HepG2 (cell line): ENCODE measurements at regions of chr22 and their contacts with region 1.

Region 1: DNA sequence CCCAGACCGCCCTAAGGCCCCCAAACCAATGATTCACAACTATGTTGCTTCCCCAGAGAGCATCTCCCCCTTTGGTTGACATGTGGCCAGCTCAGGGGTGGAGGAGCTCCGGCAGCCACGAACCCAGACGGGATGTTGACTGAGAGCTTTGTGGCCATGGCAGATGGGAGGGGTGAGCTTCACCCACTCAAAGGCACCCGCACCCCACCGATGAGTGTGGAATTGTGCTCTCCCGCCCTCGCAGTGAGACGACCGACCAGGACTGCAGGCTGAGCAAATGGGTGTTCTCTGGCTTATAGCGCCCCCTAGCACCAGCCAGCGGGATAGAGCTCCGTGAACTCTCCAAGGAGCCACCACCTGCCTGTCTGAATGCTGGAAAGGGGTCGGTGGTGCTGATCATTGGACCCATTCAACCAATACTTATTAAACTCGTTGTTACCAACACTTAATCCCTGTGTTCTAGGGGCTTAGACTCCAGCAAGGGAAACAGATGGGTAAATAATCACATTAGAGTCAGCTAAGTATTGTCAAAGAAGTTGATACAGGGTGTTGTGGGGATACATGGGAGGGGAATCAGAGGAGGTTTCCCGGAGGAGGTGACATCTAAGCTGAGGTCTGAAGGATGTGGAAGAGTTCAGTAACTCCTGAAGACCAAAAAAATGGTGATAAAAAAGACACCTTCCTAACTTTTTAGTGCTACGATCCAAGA is 4.5 kb upstream of the TIMP3 start:
- DNase-seq: peak; percentile 44
- ATAC-seq: peak; percentile 76
- H3K4me3 ChIP-seq: no peak overlapping the region
- H3K27ac ChIP-seq: no peak overlapping the region
- H3K4me1 ChIP-seq: peaks cover 62% of the 10 kb centered on the region
- H3K27me3 ChIP-seq: no peaks in the 10 kb centered on the region
- CTCF ChIP-seq: peak; percentile 98
- EP300 ChIP-seq: no peak
- POLR2A ChIP-seq: no peak
- RAD21 ChIP-seq: peak; percentile 97

Region 2: GRCh38 chr22:32579509-32580234 is 217.3 kb before region 1 on chr22:
- CTCF ChIA-PET with region 1: no interaction called
- POLR2A ChIA-PET with region 1: interaction called, 10 read pairs
- in situ Hi-C with region 1: no loop called
- intact Hi-C with region 1: no loop called
- DNase-seq: peak; percentile 50
- ATAC-seq: peak; percentile 85
- H3K4me3 ChIP-seq: no peak overlapping the region
- H3K27ac ChIP-seq: peak overlapping the region; percentile 43
- H3K4me1 ChIP-seq: peaks cover 62% of the 10 kb centered on the region
- H3K27me3 ChIP-seq: no peaks in the 10 kb centered on the region
- CTCF ChIP-seq: no peak
- EP300 ChIP-seq: 0 out of 4 replicates have a peak, but pooled peaks of 1 of the 2 experiments have one; percentile 20
- POLR2A ChIP-seq: no peak
- RAD21 ChIP-seq: no peak

Region 3: GRCh38 chr22:32660292-32660691 is 136.7 kb before region 1 on chr22:
- CTCF ChIA-PET with region 1: interaction called, 51 read pairs
- POLR2A ChIA-PET with region 1: interaction called, 20 read pairs
- in situ Hi-C with region 1: loop called (anchors 5 kb)
- intact Hi-C with region 1: loop called (anchors 1 kb)
- DNase-seq: peak; percentile 78
- ATAC-seq: peak; percentile 92
- H3K4me3 ChIP-seq: no peak overlapping the region
- H3K27ac ChIP-seq: no peak overlapping the region
- H3K4me1 ChIP-seq: peaks cover 18% of the 10 kb centered on the region
- H3K27me3 ChIP-seq: no peaks in the 10 kb centered on the region
- CTCF ChIP-seq: peak; percentile 97
- EP300 ChIP-seq: peak; percentile 25 to 63; a peak in 1 of 4 replicates
- POLR2A ChIP-seq: no peak
- RAD21 ChIP-seq: peak; percentile 97

Region 4: DNA sequence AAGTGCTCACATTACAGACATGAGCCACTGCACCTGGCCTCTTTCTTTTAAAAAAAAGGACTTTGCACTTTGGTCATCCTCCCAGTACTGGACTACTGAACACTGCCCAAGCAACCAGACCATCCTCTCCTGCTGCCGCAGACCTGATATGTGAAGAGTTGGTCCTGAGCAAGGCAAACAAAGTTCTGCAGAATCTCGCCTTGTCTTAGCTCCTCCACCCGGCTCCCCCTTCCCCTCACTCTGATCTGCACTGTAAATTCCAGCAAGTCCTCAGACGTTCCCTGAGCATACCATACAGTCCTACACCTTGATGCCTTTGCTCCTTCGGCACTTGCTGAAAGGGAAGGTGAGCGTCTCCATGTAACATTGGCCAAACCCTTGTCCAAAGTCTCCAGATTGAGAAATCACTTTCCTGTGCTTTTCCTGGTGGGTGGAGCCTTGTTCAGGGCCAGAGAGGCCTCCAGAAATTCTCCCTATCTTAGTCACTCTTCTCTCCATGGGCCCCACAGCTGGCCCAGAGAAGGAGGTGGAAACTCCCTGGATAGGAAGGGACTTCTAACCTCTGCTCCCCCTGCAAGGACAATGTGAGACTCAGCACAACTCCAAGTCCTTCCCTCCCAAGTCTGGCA is 42.5 kb before region 1 on chr22:
- CTCF ChIA-PET with region 1: no interaction called
- POLR2A ChIA-PET with region 1: no interaction called
- in situ Hi-C with region 1: no loop called
- intact Hi-C with region 1: no loop called
- DNase-seq: peak; percentile 83
- ATAC-seq: peak; percentile 84
- H3K4me3 ChIP-seq: peak overlapping the region in 1 of 3 experiments; percentile 49; a peak in 1 of 6 replicates
- H3K27ac ChIP-seq: peak overlapping the region; percentile 72
- H3K4me1 ChIP-seq: peaks cover 75% of the 10 kb centered on the region
- H3K27me3 ChIP-seq: no peaks in the 10 kb centered on the region
- CTCF ChIP-seq: 0 out of 2 replicates have a peak, but pooled peaks have one; percentile 0
- EP300 ChIP-seq: peak in 1 of 2 experiments; percentile 64; a peak in 1 of 4 replicates
- POLR2A ChIP-seq: no peak
- RAD21 ChIP-seq: no peak

Region 5: GRCh38 chr22:32775957-32776356 is 21.1 kb before region 1 on chr22:
- CTCF ChIA-PET with region 1: interaction called, 14 read pairs
- POLR2A ChIA-PET with region 1: interaction called, 84 read pairs
- in situ Hi-C with region 1: no loop called
- intact Hi-C with region 1: no loop called
- DNase-seq: peak; percentile 68
- ATAC-seq: peak; percentile 61
- H3K4me3 ChIP-seq: no peak overlapping the region
- H3K27ac ChIP-seq: no peak overlapping the region
- H3K4me1 ChIP-seq: peaks cover 54% of the 10 kb centered on the region
- H3K27me3 ChIP-seq: no peaks in the 10 kb centered on the region
- CTCF ChIP-seq: peak; percentile 71
- EP300 ChIP-seq: no peak
- POLR2A ChIP-seq: no peak
- RAD21 ChIP-seq: peak; percentile 88

Region 6: GRCh38 chr22:32810561-32811004 is 13.6 kb after region 1 on chr22:
- CTCF ChIA-PET with region 1: no interaction called
- POLR2A ChIA-PET with region 1: interaction called, 10 read pairs
- in situ Hi-C with region 1: no loop called
- intact Hi-C with region 1: no loop called
- DNase-seq: no peak
- ATAC-seq: no peak; the same call in 1 of the 3 replicates
- H3K4me3 ChIP-seq: no peak overlapping the region
- H3K27ac ChIP-seq: peak overlapping the region; percentile 62
- H3K4me1 ChIP-seq: peaks cover 64% of the 10 kb centered on the region
- H3K27me3 ChIP-seq: no peaks in the 10 kb centered on the region
- CTCF ChIP-seq: no peak
- EP300 ChIP-seq: no peak
- POLR2A ChIP-seq: no peak
- RAD21 ChIP-seq: no peak